ENCODE measurements at regions of chr1 and their contacts with region 1.

Region 1: DNA sequence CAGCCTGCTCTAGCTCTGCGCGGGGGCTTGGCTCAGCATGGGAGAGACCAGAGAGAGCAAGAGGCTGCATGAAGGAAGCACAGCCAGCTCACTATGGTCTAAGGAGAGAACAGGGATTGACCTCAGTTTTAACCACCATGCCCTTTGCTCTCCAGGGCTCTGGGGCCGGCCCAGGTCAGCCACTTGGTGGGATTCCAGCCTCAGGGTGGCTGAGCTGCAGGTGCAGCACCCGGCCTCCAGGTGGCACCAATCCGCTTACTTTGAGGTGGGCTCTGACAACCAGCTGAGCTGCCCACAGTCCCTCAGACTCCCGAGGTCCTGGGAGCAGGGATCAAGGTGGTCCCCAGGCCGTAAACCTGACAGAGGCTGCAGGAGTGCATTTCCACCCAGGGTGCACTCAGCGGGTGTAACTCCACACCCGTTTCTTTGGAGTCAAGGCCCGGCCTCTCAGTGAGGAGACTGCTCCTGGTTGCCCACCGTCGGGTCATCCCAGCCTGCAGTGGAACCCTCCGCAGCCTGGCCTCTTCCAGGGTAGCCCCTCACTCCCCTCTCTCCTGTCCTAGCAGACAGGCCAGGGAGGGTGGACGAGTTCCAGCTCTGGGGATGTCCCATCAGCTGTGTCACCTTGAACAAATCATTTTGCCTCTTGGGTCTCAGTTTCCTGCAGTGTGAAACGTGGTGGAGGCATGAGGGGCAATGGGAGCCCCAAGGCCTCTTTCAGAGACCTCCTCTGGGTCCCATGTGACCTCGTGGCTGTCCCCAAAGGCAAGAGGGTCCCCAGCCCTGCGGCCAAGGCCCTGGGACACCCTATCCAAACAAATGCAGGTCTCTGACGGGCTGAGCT is 607 bp upstream of the LGR6 start:
- DNase-seq: peak; percentile 67
- H3K27ac ChIP-seq: peak overlapping the region; percentile 39
- CTCF ChIP-seq: peak; percentile 89

Region 2: DNA sequence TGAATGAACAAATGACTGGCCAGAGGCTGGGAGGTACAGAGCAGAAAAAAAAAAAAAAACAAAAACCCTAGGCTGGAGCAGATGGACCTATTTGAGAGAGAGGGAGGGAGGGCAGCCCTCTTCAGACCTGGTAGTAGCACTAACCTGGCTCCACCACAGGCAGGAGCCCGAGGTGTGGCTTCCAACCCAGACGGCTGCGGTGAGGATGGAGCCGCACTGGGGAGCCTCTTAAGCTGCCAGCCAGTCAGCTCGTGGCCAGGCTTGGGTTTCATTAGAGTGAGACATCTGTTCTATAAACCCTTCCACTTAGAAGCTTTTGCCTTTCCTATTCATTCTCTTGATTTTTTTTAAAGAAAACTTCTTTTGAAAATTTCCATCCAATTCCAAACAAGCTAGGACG is 17.4 kb after region 1 on chr1:
- CTCF ChIA-PET with region 1: interaction called, 16 read pairs
- POLR2A ChIA-PET with region 1: no interaction called
- DNase-seq: no peak
- H3K27ac ChIP-seq: peak overlapping the region; percentile 19; the same call in 1 of the 2 replicates
- CTCF ChIP-seq: peak; percentile 44

Region 3: GRCh38 chr1:202230939-202231645 is 38.1 kb after region 1 on chr1:
- CTCF ChIA-PET with region 1: interaction called, 13 read pairs
- POLR2A ChIA-PET with region 1: no interaction called
- DNase-seq: no peak
- H3K27ac ChIP-seq: peak overlapping the region; percentile 61
- CTCF ChIP-seq: no peak

Region 4: GRCh38 chr1:202283379-202283844 is 90.4 kb after region 1 on chr1:
- CTCF ChIA-PET with region 1: interaction called, 11 read pairs
- POLR2A ChIA-PET with region 1: no interaction called
- DNase-seq: peak; percentile 100
- H3K27ac ChIP-seq: peak overlapping the region; percentile 95
- CTCF ChIP-seq: no peak

Region 5: GRCh38 chr1:202310071-202310722 is 117.2 kb after region 1 on chr1:
- CTCF ChIA-PET with region 1: interaction called, 52 read pairs
- POLR2A ChIA-PET with region 1: no interaction called
- DNase-seq: no peak
- H3K27ac ChIP-seq: no peak overlapping the region
- CTCF ChIP-seq: no peak

Region 6: DNA sequence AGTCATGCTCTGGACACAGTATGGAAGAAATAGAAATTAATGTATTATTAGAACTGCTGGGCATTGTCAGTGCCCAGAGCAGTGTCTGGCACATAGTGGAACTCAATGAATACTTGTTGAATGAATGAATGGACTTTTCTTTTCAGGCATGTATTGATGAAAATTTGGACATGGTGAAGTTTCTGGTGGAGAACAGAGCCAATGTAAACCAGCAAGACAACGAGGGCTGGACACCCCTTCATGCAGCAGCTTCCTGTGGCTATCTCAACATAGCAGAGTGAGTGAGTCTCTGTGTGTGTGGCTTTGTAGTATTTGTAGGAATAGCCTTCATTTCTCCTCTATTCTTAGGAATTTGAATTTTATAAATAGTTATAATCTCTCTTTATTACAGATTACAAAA is 223.6 kb after region 1 on chr1:
- CTCF ChIA-PET with region 1: no interaction called
- POLR2A ChIA-PET with region 1: no interaction called
- DNase-seq: no peak
- H3K27ac ChIP-seq: no peak overlapping the region
- CTCF ChIP-seq: no peak

Region 7: DNA sequence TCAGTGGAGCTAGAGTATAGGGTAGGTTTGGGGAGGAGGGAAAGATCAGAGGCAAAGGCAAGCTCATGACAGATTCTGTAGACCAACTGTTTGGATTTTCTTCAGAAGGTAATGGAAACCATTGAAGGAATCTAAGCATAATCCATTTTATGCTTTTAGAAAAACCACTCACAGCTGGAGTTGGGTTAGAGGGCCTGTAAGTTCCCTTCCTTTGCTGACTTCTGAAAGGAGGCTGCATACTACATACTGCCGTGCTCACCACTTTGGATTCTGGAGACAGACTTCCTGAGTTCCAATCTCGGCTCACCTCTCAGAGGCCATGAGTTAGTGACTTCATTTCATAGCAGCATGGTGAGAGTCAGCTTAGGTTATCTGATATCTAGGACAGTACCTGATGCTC is 523.7 kb after region 1 on chr1:
- CTCF ChIA-PET with region 1: interaction called, 14 read pairs
- POLR2A ChIA-PET with region 1: no interaction called
- DNase-seq: no peak
- H3K27ac ChIP-seq: no peak overlapping the region
- CTCF ChIP-seq: no peak